ENCODE measurements at regions of chr16 and their contacts with region 1.

Region 1: DNA sequence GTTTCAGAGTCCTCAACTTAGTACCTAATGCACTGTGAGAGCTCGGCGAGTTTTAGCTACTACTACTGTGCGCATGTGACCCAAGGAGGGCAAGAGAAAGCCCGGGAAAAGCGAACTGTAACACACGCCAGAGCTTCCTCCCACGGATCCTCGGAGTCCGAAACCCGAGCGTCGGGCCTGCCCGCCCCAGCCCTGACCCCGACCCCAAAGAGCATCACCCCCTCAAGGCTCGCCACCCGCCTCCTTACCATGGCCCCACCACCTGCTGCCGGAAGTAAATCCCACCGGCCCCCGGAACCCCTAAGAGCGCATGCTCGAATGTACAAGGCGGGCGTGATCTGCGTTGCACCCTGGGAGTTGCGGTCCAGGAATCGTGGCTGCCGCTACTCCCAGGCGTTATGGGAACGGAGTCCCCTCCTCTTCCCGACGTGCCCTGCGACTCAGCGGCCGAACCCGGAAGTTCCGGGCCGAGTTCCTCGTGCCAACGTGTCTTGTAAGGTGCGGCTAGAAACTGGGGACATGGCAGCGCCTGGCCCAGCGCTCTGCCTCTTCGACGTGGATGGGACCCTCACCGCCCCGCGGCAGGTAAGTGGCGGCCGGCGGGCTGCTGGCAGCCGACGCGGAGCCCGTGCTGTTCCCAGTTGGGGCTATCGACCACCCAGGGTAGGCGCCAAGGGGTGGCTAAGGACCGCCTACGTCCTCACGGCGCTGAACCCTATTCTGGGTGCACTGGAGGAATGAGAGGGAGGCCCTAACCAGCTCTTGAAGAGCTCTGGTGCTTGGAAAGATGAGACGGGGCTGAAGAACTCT is at the starts of genes PMM2 and TMEM186:
- DNase-seq: peak; percentile 73
- H3K4me3 ChIP-seq: peak within 1 kb of the TSS; percentile 98
- CTCF ChIP-seq: no peak

Region 2: DNA sequence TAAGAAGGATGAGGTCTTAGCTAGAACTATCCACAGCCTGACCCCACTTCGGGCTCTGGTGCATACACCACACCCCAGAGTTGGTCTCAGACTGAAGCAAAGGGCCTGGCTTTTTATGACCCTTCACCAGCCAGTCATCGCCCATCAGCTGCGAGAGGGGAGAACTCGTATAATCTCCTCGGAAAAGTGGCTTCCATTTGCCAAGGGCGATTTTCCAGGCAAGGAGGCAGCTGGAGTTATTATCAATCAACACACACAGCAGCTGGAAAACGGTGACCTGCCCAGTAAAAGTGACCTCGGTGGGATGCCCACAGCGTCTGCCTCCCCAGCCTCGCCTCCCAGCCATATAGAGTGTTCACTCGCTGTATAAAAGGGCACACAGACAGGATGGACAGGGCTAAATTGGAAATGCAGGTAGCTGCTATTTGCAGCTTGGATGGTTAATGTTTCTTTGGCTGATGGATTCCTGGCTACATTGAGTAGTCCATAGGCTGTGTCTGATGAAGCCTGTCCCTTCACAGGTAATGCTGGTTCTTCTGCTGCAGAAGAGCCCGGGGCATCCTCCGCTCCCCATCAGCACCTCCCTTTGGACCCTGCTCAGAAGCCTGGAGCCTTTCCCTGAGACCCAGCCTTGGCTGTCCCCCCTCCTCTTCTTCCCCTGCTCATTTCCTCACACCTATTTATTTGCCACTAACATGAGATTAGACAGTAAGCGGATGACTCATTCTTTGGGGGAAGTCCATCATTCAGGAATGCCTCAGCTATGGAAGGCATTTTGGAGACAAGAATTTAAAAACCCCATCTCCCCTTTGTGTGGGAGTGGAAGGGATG is 45.9 kb before region 1 on chr16:
- CTCF ChIA-PET with region 1: no interaction called
- POLR2A ChIA-PET with region 1: no interaction called
- DNase-seq: peak; percentile 34
- H3K4me3 ChIP-seq: no peak overlapping the region
- CTCF ChIP-seq: no peak

Region 3: DNA sequence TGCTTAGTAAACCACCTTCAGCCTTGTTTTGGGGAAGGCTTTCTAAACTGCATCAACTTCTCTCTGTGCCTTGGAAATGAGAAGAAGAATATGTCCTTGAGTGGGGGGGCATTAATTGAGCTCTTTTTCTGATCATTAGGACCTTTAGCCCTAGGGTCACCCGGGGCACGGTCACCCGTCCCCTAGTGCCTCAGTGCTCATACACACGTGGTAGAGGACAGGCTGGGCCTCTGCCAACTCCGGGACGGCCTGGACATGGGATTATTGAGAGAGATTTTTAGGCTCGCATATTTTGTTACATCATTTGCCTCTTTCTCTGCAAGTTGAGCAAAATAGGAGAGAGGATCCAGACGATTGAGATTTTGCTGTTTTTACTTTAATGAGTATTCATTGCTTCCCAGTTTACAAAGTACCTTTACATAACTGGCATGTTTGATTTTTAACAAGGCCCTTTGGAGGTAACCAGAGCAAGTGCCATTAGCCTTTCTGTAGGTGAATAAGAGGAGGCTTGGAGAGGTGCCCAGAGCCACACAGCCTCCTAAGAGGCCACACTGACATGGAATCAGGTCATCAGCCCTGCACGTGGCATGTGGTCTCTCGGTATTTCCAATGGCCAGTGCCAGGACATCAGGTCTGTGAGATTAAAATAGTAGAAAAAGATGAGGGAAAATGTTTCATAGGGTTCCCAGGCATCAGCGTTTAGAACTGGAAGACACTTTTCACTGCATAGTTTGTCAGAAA is 11.2 kb after region 1 on chr16:
- CTCF ChIA-PET with region 1: interaction called, 11 read pairs
- POLR2A ChIA-PET with region 1: interaction called, 3 read pairs
- DNase-seq: no peak
- H3K4me3 ChIP-seq: no peak overlapping the region
- CTCF ChIP-seq: no peak